Psoas muscle (tissue), 8 donors: ENCODE measurements at regions of chr11 and their contacts with region 1.

Region 1: DNA sequence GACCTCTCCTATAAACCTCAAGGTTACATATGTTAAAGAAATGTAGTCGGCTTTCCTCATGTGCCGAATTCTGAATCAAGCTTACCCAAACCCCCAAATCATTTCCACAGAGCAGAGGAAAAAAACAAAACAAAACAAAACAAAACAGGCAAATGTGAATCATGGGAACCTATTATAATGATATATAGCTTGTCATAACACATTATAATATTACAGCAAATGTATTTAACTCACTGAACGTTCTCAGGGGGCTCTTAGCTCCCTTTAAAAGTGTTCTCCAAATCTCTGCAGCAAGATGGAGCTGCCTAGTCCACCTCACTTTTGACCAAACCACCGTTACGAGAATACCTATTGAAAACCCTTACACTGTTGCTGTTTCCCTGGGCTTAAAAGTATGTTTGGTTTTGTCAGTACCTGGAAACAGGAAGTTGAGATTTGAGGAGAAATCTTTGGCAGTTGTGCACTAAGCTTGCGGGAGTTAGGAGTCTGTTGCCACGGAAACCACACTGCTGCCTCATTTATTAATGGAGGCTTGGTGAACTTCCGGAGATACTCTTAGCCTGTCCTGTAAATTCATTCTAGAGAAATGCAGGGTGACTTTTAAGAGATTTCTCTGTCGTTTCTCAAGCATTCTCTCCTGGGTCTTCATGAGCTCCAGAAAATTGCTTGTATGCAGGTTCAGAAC is 167.0 kb upstream of the RASSF10 start:
- DNase-seq: no peak
- ATAC-seq: no peak
- H3K4me3 ChIP-seq: no peak overlapping the region
- H3K27ac ChIP-seq: peak overlapping the region; percentile 69
- H3K4me1 ChIP-seq: peaks cover 76% of the 10 kb centered on the region
- H3K27me3 ChIP-seq: no peaks in the 10 kb centered on the region
- CTCF ChIP-seq: no peak

Region 2: GRCh38 chr11:13907678-13908077 is 1065.6 kb after region 1 on chr11:
- intact Hi-C with region 1: loop called in 1 of 2 experiments (anchors 5 kb)
- DNase-seq: no peak
- ATAC-seq: no peak
- H3K4me3 ChIP-seq: no peak overlapping the region
- H3K27ac ChIP-seq: no peak overlapping the region
- H3K4me1 ChIP-seq: no peaks in the 10 kb centered on the region
- H3K27me3 ChIP-seq: no peaks in the 10 kb centered on the region
- CTCF ChIP-seq: no peak